ENCODE measurements at regions of chr11 and their contacts with region 1.

Region 1: GRCh38 chr11:9573052-9573774 is at the start of gene WEE1:
- DNase-seq: peak; percentile 97 to 99 (median 97)
- H3K4me3 ChIP-seq: peak within 1 kb of the TSS; percentile 81 to 95 (median 89)
- H3K27ac ChIP-seq: peak within 1 kb of the TSS; percentile 78 to 90
- H3K4me1 ChIP-seq: peaks cover 14 to 45% (median 30%) of the 10 kb centered on the region in 4 experiments
- H3K27me3 ChIP-seq: no peaks in the 10 kb centered on the region

Region 2: GRCh38 chr11:9534791-9535781 is 38.1 kb before region 1 on chr11:
- CTCF ChIA-PET with region 1: interaction called, 10 read pairs
- POLR2A ChIA-PET with region 1: interaction called, 3 read pairs
- DNase-seq: peak; percentile 65 to 81 (median 73)
- H3K4me3 ChIP-seq: no peak overlapping the region
- H3K27ac ChIP-seq: no peak overlapping the region
- H3K4me1 ChIP-seq: no peaks in the 10 kb centered on the region
- H3K27me3 ChIP-seq: no peaks in the 10 kb centered on the region

Region 3: DNA sequence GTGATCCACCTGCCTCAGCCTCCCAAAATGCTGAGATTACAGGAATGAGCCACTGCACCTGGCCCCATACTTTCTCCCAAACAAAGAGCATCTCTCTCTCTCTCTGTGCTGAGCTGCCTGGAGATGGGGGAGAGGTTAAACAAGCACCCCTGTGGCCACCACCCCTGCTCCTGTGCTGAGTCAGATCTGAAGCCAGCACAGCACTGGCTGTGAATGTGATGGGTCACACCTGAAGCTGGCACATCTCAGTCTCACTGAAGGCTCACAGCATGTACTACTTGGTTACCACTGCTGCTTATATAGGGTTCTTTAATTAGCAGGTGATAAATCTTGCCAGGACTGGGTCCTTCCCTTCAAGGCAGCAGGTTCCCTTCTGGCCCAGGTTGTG is 10.5 kb before region 1 on chr11:
- CTCF ChIA-PET with region 1: interaction called, 12 read pairs
- POLR2A ChIA-PET with region 1: interaction called, 3 read pairs
- DNase-seq: no peak
- H3K4me3 ChIP-seq: no peak overlapping the region
- H3K27ac ChIP-seq: no peak overlapping the region
- H3K4me1 ChIP-seq: peaks cover 0 to 5% (median 0%) of the 10 kb centered on the region in 4 experiments
- H3K27me3 ChIP-seq: no peaks in the 10 kb centered on the region

Region 4: GRCh38 chr11:9594267-9595046 is 21.2 kb after region 1 on chr11:
- CTCF ChIA-PET with region 1: interaction called, 17 read pairs
- POLR2A ChIA-PET with region 1: interaction called, 3 read pairs
- DNase-seq: no peak
- H3K4me3 ChIP-seq: no peak overlapping the region
- H3K27ac ChIP-seq: no peak overlapping the region
- H3K4me1 ChIP-seq: no peaks in the 10 kb centered on the region
- H3K27me3 ChIP-seq: no peaks in the 10 kb centered on the region

Region 5: DNA sequence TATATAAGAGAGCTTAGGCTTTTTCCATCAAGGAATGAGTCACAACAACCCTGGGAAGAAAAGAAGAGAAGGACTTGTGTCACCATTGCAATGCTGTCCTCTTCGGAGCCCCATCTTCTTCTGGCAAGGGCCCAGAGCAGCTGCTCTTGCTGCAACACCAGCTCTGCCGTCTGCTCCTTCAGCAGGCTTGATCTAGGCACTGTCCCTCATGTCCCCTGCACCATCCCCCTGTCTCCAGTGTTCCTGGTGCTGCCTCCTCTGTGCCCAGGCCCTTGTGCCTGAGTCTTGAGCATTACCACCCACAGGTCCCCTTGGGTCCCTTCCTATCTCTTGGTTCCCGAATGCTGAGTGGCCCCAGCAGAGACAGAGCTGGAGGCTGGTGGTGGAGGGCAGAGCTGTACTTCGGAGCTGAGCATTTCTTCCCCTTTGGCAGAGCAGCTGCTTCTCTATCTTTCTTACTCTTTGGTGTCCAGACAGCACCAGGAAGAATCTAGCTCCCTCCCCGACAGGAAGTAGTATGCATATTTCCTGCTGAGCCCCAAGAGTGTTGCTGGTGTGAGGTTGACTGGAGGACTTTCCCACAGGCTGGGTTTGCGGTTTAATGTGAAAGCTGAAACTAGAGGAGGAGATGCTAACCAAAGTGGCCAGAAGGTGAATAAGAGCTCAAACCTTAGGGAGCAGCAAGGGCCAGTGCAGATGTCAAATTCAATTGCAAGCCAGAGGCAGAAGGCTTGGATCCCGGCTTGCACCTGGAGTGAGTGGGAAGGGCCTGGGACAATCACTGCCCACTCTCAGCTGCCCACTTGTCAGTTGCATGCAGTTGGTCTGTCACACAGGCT is 28.0 kb after region 1 on chr11:
- CTCF ChIA-PET with region 1: interaction called, 12 read pairs
- POLR2A ChIA-PET with region 1: interaction called, 3 read pairs
- DNase-seq: peak; percentile 81 to 92 (median 92)
- H3K4me3 ChIP-seq: peak overlapping the region; percentile 8 to 71 (median 32)
- H3K27ac ChIP-seq: peak overlapping the region; percentile 47 to 60
- H3K4me1 ChIP-seq: peaks cover 5 to 30% (median 22%) of the 10 kb centered on the region in 4 experiments
- H3K27me3 ChIP-seq: no peaks in the 10 kb centered on the region